PC-9 (cell line): ENCODE measurements at regions of chr17 and their contacts with region 1.

Region 1: GRCh38 chr17:75601057-75602051 is 13.8 kb downstream of the MYO15B start:
- DNase-seq: peak; percentile 92 to 95
- H3K4me3 ChIP-seq: no peak overlapping the region
- H3K27ac ChIP-seq: peak overlapping the region; percentile 43; the same call in 1 of the 2 replicates
- H3K4me1 ChIP-seq: peaks cover 42% of the 10 kb centered on the region
- H3K27me3 ChIP-seq: no peaks in the 10 kb centered on the region
- CTCF ChIP-seq: peak; percentile 95

Region 2: GRCh38 chr17:75309025-75309772 is 292.2 kb before region 1 on chr17:
- CTCF ChIA-PET with region 1: interaction called, 10 read pairs
- POLR2A ChIA-PET with region 1: no interaction called
- intact Hi-C with region 1: no loop called
- DNase-seq: peak in 1 of 2 experiments; percentile 56
- H3K4me3 ChIP-seq: no peak overlapping the region
- H3K27ac ChIP-seq: no peak overlapping the region
- H3K4me1 ChIP-seq: no peaks in the 10 kb centered on the region; the same call in 1 of the 2 replicates
- H3K27me3 ChIP-seq: no peaks in the 10 kb centered on the region
- CTCF ChIP-seq: no peak

Region 3: DNA sequence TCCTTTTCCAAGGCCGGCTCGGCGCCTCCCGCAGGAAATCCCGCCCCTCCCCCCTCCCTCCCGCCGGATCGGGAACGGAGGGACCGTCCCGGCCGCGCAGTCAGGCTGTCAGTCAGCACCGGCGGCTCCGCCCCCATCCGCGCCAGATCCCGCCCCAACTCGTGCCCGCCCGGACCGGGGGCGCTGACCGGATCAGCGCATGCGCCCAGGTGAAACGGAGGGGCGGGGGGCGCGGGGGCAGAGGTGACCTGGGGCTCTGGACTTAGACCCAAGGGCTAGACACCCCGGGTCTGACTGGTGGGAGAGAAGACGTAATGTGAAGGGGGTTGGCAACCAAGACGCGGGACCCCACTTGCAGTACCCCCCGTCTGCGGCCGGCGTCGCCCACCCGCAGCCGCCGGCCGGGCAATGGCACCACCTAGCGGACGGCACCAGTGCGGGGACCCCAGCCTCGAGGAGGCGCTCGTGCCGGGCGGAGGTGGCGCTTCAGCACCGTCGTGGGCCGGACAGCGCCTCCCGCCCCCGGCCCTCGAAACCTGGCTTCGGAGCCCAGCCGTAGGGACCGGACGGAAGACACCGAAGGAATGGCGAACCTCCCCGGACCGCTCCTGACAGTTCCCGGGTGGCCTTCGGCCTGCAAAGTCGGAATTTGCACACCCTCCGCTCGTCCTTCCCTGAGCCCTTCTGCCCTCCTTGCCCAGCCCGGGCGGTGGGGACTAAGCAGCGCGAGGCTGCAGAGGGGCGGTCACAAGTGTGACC is 85.7 kb before region 1 on chr17 and contains the start of gene CASKIN2:
- CTCF ChIA-PET with region 1: interaction called, 5 read pairs
- POLR2A ChIA-PET with region 1: no interaction called
- intact Hi-C with region 1: loop called (anchors 5 kb)
- DNase-seq: peak; percentile 71 to 96
- H3K4me3 ChIP-seq: peak within 1 kb of the TSS; percentile 89
- H3K27ac ChIP-seq: no peak within 1 kb of the TSS
- H3K4me1 ChIP-seq: peaks cover 46% of the 10 kb centered on the region
- H3K27me3 ChIP-seq: no peaks in the 10 kb centered on the region
- CTCF ChIP-seq: peak; percentile 95
- total RNA-seq, gene CASKIN2: 24.4 and 25.4 TPM in 2 replicates

Region 4: GRCh38 chr17:75524953-75525719 is 76.2 kb before region 1 on chr17 and contains the start of gene LLGL2:
- CTCF ChIA-PET with region 1: interaction called, 15 read pairs
- POLR2A ChIA-PET with region 1: interaction called, 14 read pairs
- intact Hi-C with region 1: no loop called
- DNase-seq: peak; percentile 77 to 95
- H3K4me3 ChIP-seq: peak within 1 kb of the TSS; percentile 100
- H3K27ac ChIP-seq: peak within 1 kb of the TSS; percentile 55
- H3K4me1 ChIP-seq: peaks cover 21% of the 10 kb centered on the region
- H3K27me3 ChIP-seq: no peaks in the 10 kb centered on the region
- CTCF ChIP-seq: peak; percentile 60
- total RNA-seq, gene LLGL2: 138 and 156 TPM in 2 replicates

Region 5: GRCh38 chr17:75557075-75557882 is 44.1 kb before region 1 on chr17:
- CTCF ChIA-PET with region 1: interaction called, 15 read pairs
- POLR2A ChIA-PET with region 1: no interaction called
- intact Hi-C with region 1: no loop called
- DNase-seq: peak; percentile 80 to 89
- H3K4me3 ChIP-seq: no peak overlapping the region
- H3K27ac ChIP-seq: peak overlapping the region; percentile 39
- H3K4me1 ChIP-seq: peaks cover 32% of the 10 kb centered on the region
- H3K27me3 ChIP-seq: no peaks in the 10 kb centered on the region
- CTCF ChIP-seq: no peak

Region 6: GRCh38 chr17:75589012-75589918 is 12.1 kb before region 1 on chr17:
- CTCF ChIA-PET with region 1: interaction called, 10 read pairs
- POLR2A ChIA-PET with region 1: no interaction called
- intact Hi-C with region 1: no loop called
- DNase-seq: peak; percentile 51 to 93
- H3K4me3 ChIP-seq: peak overlapping the region; percentile 61
- H3K27ac ChIP-seq: no peak overlapping the region
- H3K4me1 ChIP-seq: no peaks in the 10 kb centered on the region
- H3K27me3 ChIP-seq: no peaks in the 10 kb centered on the region
- CTCF ChIP-seq: no peak; the same call in 1 of the 2 replicates

Region 7: DNA sequence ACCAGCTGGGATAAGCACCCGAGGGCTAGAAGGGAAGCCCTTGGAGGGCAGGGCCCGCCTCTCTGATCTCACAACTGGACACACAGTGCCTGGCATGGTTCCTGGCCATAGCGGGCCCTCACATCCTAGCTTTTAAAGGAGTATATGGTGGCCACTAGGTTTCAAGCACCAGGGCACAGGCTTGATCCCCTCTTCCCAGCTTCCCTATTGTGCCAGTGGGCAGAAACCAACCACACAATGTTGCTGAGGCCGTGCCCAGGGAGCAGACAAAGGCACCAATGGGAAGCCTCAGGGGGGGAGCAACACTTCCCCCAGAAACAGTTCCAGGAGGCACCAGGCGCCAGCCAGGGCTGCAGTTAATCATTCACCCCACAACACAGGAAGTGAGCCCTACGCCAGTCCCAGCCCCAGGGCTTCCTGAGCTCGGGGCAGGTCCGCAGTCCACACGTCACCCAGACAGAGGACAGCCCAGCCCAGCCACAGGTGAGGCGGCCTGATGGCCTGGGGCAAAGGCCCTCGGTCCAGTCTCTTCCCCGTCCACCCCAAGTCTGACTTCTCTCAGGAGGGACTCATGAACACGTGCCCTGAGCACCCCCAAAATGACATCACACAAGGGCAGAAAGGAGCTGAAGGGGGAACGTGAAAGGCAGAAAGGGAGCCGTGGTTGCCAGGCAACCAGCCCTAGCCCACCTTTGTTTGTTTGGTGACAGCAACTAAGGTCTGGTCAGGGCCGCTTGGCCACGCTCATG is 44.7 kb after region 1 on chr17:
- CTCF ChIA-PET with region 1: interaction called, 15 read pairs
- POLR2A ChIA-PET with region 1: interaction called, 5 read pairs
- intact Hi-C with region 1: loop called (anchors 5 kb)
- DNase-seq: peak; percentile 84 to 85
- H3K4me3 ChIP-seq: no peak overlapping the region
- H3K27ac ChIP-seq: peak overlapping the region; percentile 92
- H3K4me1 ChIP-seq: peaks cover 51% of the 10 kb centered on the region
- H3K27me3 ChIP-seq: no peaks in the 10 kb centered on the region
- CTCF ChIP-seq: no peak